SK-N-SH (cell line): ENCODE measurements at regions of chr10 and their contacts with region 1.

Region 1: DNA sequence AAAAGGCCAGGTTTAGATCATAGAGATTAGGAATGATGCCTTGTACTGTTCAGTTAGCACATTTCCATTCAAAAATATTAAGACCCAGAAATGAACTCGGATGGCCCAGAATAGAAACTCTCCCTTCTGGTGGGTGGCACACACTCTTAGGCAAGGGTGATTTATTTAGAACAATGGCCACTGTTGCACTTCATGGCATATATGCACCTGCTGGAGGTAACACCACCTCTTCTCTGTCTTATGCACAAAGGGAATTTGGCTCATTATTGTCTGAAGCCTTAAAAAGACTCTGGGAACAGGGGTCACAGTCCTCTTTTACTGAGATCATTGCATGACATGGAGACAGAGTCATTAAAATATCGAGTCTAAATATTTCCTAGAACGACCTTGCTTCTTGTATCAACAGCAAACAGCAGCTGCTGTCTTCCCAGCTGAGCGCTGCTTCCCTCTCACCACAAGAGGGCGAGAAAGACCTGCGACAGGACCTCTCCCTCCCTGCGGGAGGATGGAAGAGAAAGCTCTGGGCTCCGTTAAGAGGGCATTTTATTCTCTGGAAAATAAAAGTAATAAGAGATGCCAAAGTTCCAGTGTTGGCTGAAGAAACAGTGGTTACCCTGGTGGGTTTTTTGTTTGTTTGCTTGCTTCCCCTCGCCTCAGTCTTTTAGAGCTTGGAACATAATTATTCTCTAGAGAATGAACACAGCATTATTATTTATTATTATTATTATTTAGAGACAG is 13.6 kb upstream of the BAMBI start:
- DNase-seq: peak; percentile 82
- H3K4me3 ChIP-seq: no peak overlapping the region; a peak in 1 of 4 replicates
- H3K27ac ChIP-seq: no peak overlapping the region
- H3K4me1 ChIP-seq: no peaks in the 10 kb centered on the region
- H3K27me3 ChIP-seq: 0 out of 2 replicates have a peak, but pooled peaks cover 9% of the 10 kb centered on the region
- CTCF ChIP-seq: peak; percentile 99
- EP300 ChIP-seq: no peak
- RAD21 ChIP-seq: peak; percentile 100

Region 2: DNA sequence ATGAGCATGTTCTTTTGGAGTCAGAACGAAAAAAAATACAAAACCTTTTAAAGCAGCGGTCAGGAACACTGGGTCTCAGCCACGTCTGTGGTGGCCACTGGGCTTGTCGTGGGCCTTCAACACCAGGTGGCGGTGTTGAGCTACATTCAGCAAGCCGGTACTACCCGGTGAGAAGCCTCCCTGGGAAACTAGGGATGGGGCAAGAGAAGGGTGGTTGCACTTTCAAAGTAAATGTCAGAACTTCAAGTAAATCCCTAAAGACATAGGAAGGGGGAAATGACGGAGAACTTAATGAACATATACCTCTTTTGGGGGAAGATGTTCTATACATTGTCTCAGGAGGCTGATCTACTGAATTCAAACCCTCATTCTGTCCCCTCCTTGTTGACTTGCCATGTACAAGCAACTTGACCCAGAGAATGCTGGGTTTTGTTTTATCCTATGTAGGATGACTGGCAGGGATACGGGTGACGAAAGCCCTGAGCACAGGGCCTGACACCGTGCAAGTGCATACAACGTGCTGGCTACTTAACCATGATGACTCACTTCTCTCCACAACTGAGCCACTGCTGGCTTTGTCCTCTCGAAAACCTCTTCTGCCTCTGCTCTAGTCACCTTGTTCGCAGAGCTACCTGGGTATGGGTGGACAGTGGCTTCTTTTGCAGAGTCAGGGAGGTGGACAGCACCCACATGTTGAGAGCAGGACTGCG is 35.4 kb before region 1 on chr10:
- CTCF ChIA-PET with region 1: interaction called, 18 read pairs
- POLR2A ChIA-PET with region 1: no interaction called
- DNase-seq: peak; percentile 79
- H3K4me3 ChIP-seq: no peak overlapping the region
- H3K27ac ChIP-seq: no peak overlapping the region
- H3K4me1 ChIP-seq: no peaks in the 10 kb centered on the region
- H3K27me3 ChIP-seq: no peaks in the 10 kb centered on the region; the same call in 1 of the 2 replicates
- CTCF ChIP-seq: peak; percentile 92
- EP300 ChIP-seq: no peak
- RAD21 ChIP-seq: peak; percentile 88

Region 3: DNA sequence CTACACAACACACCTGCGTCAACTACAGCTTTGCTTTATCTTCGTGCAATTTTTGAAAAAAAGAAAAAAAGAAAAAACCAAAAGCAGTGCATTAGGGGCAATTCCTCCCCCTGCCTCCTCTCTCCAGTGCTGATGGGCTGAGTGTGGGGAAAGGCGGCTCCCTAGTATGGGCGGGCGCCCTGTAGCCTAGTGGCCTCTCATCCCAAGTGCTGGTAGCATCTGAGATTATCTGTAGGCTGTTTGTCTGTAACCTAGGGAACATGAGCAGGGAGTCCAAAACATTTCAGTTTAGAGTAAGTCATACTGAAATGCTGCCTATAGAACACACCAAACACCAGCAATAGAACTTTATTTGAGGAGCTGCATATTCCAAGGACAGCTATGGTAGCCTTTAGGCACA is 11.0 kb before region 1 on chr10:
- CTCF ChIA-PET with region 1: interaction called, 20 read pairs
- POLR2A ChIA-PET with region 1: no interaction called
- DNase-seq: no peak
- H3K4me3 ChIP-seq: no peak overlapping the region
- H3K27ac ChIP-seq: no peak overlapping the region
- H3K4me1 ChIP-seq: no peaks in the 10 kb centered on the region
- H3K27me3 ChIP-seq: no peaks in the 10 kb centered on the region
- CTCF ChIP-seq: no peak
- EP300 ChIP-seq: no peak
- RAD21 ChIP-seq: no peak

Region 4: GRCh38 chr10:28991326-28992270 is 327.9 kb after region 1 on chr10:
- CTCF ChIA-PET with region 1: interaction called, 24 read pairs
- POLR2A ChIA-PET with region 1: no interaction called
- DNase-seq: peak; percentile 48
- H3K4me3 ChIP-seq: no peak overlapping the region; a peak in 1 of 4 replicates
- H3K27ac ChIP-seq: no peak overlapping the region
- H3K4me1 ChIP-seq: no peaks in the 10 kb centered on the region; a peak in 1 of 4 replicates
- H3K27me3 ChIP-seq: no peaks in the 10 kb centered on the region
- CTCF ChIP-seq: peak; percentile 75
- EP300 ChIP-seq: no peak
- RAD21 ChIP-seq: peak; percentile 86

Region 5: GRCh38 chr10:29157321-29157720 is 493.6 kb after region 1 on chr10:
- CTCF ChIA-PET with region 1: interaction called, 11 read pairs
- POLR2A ChIA-PET with region 1: no interaction called
- DNase-seq: no peak
- H3K4me3 ChIP-seq: no peak overlapping the region
- H3K27ac ChIP-seq: no peak overlapping the region
- H3K4me1 ChIP-seq: peaks cover 6 to 15% of the 10 kb centered on the region in 2 experiments; a peak in 3 of 4 replicates
- H3K27me3 ChIP-seq: no peaks in the 10 kb centered on the region
- CTCF ChIP-seq: no peak
- EP300 ChIP-seq: no peak
- RAD21 ChIP-seq: no peak

Region 6: GRCh38 chr10:29309465-29309864 is 645.7 kb after region 1 on chr10:
- CTCF ChIA-PET with region 1: interaction called, 133 read pairs
- POLR2A ChIA-PET with region 1: no interaction called
- DNase-seq: no peak
- H3K4me3 ChIP-seq: no peak overlapping the region
- H3K27ac ChIP-seq: no peak overlapping the region
- H3K4me1 ChIP-seq: no peaks in the 10 kb centered on the region; a peak in 1 of 4 replicates
- H3K27me3 ChIP-seq: no peaks in the 10 kb centered on the region
- CTCF ChIP-seq: no peak
- EP300 ChIP-seq: no peak
- RAD21 ChIP-seq: no peak